GM18951 (cell line): ENCODE measurements at regions of chr20 and their contacts with region 1.

Region 1: DNA sequence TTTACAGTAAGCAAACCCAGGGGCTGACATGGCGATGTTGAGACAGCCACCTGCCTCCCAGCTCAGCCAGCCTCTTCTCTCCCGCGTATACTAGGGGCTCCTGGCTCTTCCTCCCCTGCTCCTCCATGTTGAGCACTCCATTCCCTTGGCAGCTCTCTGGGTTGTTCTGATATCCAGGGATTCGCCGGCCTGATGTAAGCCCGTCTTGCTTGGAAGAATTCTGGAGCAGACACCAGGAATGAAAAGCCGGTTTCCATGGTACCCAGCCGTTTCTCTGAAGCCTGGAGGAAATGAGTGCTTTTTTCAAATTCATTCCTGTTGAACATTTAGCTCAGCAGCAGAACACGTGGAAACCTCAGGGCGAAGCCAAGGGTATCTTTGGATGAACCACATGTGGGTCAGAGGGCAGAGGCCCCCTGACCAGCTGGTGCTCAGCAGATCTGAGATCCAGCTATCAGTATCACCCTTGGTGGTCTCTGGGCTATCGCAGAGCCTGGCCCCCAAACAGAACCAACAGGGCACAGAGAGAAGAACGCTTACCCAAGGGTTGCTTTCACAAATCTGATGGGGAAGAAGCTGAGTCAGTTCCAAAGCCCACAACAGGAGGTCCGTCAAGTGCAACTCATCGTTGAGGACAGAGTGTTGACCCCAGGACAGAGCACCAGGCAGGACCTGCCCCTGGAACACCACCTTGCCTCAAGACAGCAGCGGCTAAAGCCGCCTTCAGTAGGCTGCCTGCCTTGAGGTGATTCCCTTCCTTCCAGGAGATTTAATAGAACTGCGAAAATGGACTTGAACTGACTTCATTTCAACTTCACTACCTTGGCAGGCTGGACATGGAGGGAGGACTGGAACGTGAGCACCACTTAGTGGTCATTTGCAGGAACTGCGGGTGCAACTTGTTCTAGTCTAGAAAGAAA is 96.1 kb upstream of the RIN2 start:
- POLR2A ChIP-seq: no peak

Region 2: GRCh38 chr20:19205977-19206396 is 456.0 kb before region 1 on chr20:
- in situ Hi-C with region 1: loop called (anchors 10 kb)
- POLR2A ChIP-seq: no peak

Region 3: GRCh38 chr20:19497064-19497463 is 164.9 kb before region 1 on chr20:
- in situ Hi-C with region 1: no loop called
- POLR2A ChIP-seq: no peak